ENCODE measurements at regions of chr2 and their contacts with region 1.

Region 1: GRCh38 chr2:240060977-240061591 is 7.8 kb upstream of the OR6B3 start:
- DNase-seq: peak in 1 of 3 donors; percentile 77
- ATAC-seq: peak; percentile 51
- H3K4me3 ChIP-seq: no peak overlapping the region
- H3K4me1 ChIP-seq: no peaks in the 10 kb centered on the region
- CTCF ChIP-seq: peak; percentile 23

Region 2: DNA sequence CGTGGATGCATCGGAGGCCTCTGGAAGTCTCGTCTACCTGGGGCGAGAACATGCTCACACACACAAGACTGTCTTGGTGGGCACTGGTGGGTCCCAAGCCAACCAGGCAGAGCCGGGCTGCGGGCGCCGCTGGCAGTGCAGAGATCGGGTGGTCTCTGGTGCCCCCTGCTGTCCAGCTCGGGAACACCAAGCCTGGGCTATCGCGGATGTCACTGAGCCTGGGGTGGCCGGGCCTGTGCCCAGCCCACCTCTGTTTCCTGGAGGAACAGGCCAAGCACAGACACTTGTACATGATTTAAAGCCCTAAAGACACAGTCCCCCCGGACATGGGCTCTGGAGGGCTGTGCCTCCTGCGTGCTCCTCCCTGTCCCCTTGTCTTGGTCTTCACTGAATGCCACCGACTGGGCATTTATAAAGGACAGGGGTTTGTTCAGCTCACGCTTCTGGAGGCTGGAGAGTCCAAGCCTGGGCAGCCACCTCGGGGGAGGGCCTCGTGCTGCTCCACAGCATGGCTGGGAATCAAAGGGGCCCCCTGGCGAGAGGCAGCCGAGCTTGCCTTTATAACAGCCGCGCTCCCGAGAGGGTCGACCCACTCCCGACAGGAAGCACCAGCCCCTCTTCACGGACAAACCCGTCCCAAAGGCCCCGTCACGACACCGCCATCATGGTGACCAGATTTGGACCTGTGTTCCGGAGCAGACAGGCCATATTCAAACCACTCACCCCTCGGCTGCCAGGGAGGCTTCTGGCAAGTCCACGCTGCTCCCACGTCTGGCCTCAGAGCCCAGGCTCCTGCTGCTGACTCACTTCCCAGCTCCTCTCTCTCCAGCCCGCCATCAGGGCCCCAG is 82.9 kb after region 1 on chr2:
- intact Hi-C with region 1: loop called (anchors 5 to 10 kb)
- DNase-seq: peak; percentile 68 to 83 (median 79)
- ATAC-seq: peak; percentile 92
- H3K4me3 ChIP-seq: no peak overlapping the region
- H3K4me1 ChIP-seq: no peaks in the 10 kb centered on the region
- CTCF ChIP-seq: peak; percentile 88